ENCODE measurements at regions of chr3 and their contacts with region 1.

Region 1: GRCh38 chr3:171459942-171460724 is at the start of gene TNIK:
- DNase-seq: peak; percentile 94 to 95
- ATAC-seq: peak; percentile 83 to 85
- H3K4me3 ChIP-seq: peak within 1 kb of the TSS; percentile 68 to 88 (median 78)
- H3K27ac ChIP-seq: peak within 1 kb of the TSS; percentile 85 to 93 (median 92)
- H3K4me1 ChIP-seq: peaks cover 31 to 45% of the 10 kb centered on the region in 2 donors
- H3K27me3 ChIP-seq: no peaks in the 10 kb centered on the region
- CTCF ChIP-seq: peak in 1 of 5 experiments; percentile 42
- POLR2A ChIP-seq: peak; percentile 54 to 76
- total RNA-seq, gene TNIK: 5.2 to 19.7 (median 10.6) TPM

Region 2: DNA sequence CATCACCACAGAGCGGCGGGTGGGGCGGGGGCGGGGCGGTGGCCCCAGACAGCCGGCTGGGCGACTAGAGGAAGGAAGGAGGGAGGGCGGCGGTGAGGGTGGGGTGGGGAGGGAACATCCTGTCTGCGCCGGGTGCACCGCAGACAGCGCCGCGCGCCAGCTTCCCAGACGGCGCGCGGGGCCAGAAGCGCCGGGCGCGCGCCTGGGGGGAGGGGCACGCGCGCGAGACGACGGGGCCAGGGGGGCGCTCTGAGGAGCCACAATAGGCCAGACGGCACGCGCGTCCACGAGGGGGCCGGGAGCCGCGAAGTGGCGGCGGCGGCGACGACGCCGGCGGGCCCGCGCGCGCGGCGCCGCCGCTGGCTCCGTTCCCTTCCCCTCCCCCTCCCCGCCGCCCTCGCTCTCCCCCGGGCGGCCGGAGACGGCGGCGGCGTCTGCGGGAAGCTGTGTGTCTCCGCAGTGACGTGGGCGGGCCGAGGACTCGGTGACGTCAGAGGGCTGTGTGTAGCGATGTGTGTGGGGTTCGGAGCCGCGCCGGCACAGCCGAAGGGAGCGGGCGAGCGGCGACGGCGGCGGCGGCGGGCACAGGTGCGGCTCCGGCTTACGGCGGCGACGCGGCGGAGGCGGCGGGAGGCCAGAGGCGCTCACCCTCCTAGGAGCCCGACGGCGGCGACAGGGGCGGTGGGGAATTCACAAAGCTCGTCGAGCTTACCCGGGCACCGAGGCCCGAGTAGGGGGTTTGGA is 1102.8 kb before region 1 on chr3 and contains the start of gene SKIL:
- in situ Hi-C with region 1: no loop called
- intact Hi-C with region 1: loop called (anchors 10 kb)
- DNase-seq: peak; percentile 95 to 97
- ATAC-seq: peak; percentile 77 to 83
- H3K4me3 ChIP-seq: peak within 1 kb of the TSS; percentile 86 to 93 (median 92)
- H3K27ac ChIP-seq: peak within 1 kb of the TSS; percentile 98 to 99 (median 99)
- H3K4me1 ChIP-seq: peaks cover 30 to 47% of the 10 kb centered on the region in 2 donors
- H3K27me3 ChIP-seq: no peaks in the 10 kb centered on the region
- CTCF ChIP-seq: peak in 2 of 5 experiments; percentile 3 to 11
- POLR2A ChIP-seq: peak; percentile 92 to 93
- total RNA-seq, gene SKIL: 26.7 to 45.1 (median 29.4) TPM

Region 3: GRCh38 chr3:171187706-171188290 is 272.3 kb before region 1 on chr3:
- in situ Hi-C with region 1: loop called (anchors 5 to 25 kb)
- intact Hi-C with region 1: loop called (anchors 2 kb)
- DNase-seq: no peak
- ATAC-seq: peak; percentile 82 to 88
- H3K4me3 ChIP-seq: no peak overlapping the region
- H3K27ac ChIP-seq: no peak overlapping the region
- H3K4me1 ChIP-seq: peaks cover 21 to 38% of the 10 kb centered on the region in 2 donors
- H3K27me3 ChIP-seq: no peaks in the 10 kb centered on the region
- CTCF ChIP-seq: peak; percentile 53 to 64 (median 63)
- POLR2A ChIP-seq: no peak

Region 4: GRCh38 chr3:171284308-171285075 is 175.6 kb before region 1 on chr3:
- in situ Hi-C with region 1: no loop called
- intact Hi-C with region 1: loop called (anchors 1 kb)
- DNase-seq: peak; percentile 80 to 82
- ATAC-seq: peak; percentile 89 to 93
- H3K4me3 ChIP-seq: no peak overlapping the region
- H3K27ac ChIP-seq: peak overlapping the region; percentile 80 to 92 (median 82)
- H3K4me1 ChIP-seq: peaks cover 56 to 66% of the 10 kb centered on the region in 2 donors
- H3K27me3 ChIP-seq: no peaks in the 10 kb centered on the region
- CTCF ChIP-seq: no peak
- POLR2A ChIP-seq: peak in 1 of 2 donors; percentile 66

Region 5: GRCh38 chr3:171334465-171334811 is 125.7 kb before region 1 on chr3:
- in situ Hi-C with region 1: no loop called
- intact Hi-C with region 1: loop called (anchors 5 kb)
- DNase-seq: peak; percentile 65 to 86
- ATAC-seq: peak; percentile 91 to 95
- H3K4me3 ChIP-seq: no peak overlapping the region
- H3K27ac ChIP-seq: peak overlapping the region; percentile 81 to 91 (median 86)
- H3K4me1 ChIP-seq: peaks cover 50 to 62% of the 10 kb centered on the region in 2 donors
- H3K27me3 ChIP-seq: no peaks in the 10 kb centered on the region
- CTCF ChIP-seq: no peak
- POLR2A ChIP-seq: no peak

Measured in gastrocnemius medialis (tissue), 4 donors.